ENCODE measurements at regions of chr22 and their contacts with region 1.

Region 1: GRCh38 chr22:26589845-26590736 is at the start of gene TPST2:
- DNase-seq: peak; percentile 64 to 90 (median 77)
- ATAC-seq: peak; percentile 81
- H3K4me3 ChIP-seq: peak within 1 kb of the TSS; percentile 75 to 88
- H3K4me3 Mint-ChIP-seq: peak within 1 kb of the TSS; percentile 94
- H3K27ac ChIP-seq: peak within 1 kb of the TSS; percentile 75 to 85
- H3K27ac Mint-ChIP-seq: peak within 1 kb of the TSS; percentile 96
- H3K4me1 ChIP-seq: peaks cover 79% of the 10 kb centered on the region
- H3K4me1 Mint-ChIP-seq: peaks cover 80% of the 10 kb centered on the region
- H3K27me3 ChIP-seq: no peaks in the 10 kb centered on the region
- H3K27me3 Mint-ChIP-seq: no peaks in the 10 kb centered on the region
- CTCF ChIP-seq: no peak
- total RNA-seq, gene TPST2: 24.3 to 26.3 TPM

Region 2: GRCh38 chr22:25067851-25068421 is 1522.2 kb before region 1 on chr22:
- CTCF ChIA-PET with region 1: no interaction called
- POLR2A ChIA-PET with region 1: no interaction called
- intact Hi-C with region 1: loop called in 1 of 2 experiments (anchors 10 kb)
- DNase-seq: peak; percentile 73 to 97 (median 87)
- ATAC-seq: peak; percentile 85
- H3K4me3 ChIP-seq: peak overlapping the region; percentile 1 to 40
- H3K4me3 Mint-ChIP-seq: peak overlapping the region; percentile 77
- H3K27ac ChIP-seq: peak overlapping the region; percentile 69 to 72
- H3K27ac Mint-ChIP-seq: peak overlapping the region; percentile 99
- H3K4me1 ChIP-seq: peaks cover 67% of the 10 kb centered on the region
- H3K4me1 Mint-ChIP-seq: peaks cover 94% of the 10 kb centered on the region
- H3K27me3 ChIP-seq: no peaks in the 10 kb centered on the region
- H3K27me3 Mint-ChIP-seq: no peaks in the 10 kb centered on the region
- CTCF ChIP-seq: no peak

Region 3: DNA sequence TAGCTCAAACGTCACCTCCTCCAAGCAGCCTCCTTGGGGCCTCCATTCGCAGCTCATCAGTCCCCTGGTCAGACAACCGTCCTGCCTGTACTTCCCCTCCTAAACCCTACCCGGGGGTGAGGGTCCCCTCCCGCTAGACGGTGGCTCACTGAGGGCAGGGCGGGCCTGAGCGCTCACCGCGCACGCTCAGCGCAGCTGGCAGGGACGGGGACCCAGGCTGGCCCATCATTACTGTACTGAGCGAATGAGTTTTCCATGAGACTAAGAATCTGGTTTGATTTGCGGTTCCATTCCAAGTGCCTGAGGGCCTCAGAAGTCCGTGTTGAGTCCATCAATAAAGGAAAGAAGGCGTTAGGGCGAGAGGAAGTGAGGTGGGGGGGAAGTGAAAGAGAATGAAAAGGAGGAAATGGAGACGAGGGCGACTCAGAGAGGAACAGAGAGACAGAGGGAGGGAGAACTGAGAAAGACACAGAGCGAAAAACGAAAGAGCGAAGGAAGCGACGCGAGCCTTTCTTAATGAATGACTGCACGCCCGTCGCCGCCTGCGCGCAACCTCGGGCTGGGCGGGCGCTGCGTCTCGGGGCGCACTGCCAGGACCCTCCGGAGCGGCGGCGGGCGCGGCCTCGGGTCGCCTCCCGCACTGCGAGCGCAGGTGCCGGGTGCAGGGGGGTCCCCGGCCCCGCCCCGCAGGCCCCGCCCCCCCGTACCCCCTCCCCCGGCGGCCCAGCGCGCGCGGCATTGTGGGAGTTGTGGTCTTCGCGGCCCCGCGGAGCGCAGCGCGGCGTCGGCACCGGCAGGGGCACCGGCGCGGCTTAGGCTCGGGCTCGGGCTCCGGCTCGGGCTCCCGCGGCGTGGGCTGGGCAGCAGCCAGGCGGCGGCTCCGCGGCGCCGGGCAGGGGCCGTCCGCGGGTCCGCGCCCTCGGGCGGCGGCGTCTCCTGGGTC is 161.3 kb before region 1 on chr22 and contains the start of gene ASPHD2:
- CTCF ChIA-PET with region 1: no interaction called
- POLR2A ChIA-PET with region 1: no interaction called
- intact Hi-C with region 1: loop called in 1 of 2 experiments (anchors 5 kb)
- DNase-seq: peak; percentile 62 to 92 (median 80)
- ATAC-seq: peak; percentile 89
- H3K4me3 ChIP-seq: peak within 1 kb of the TSS; percentile 84 to 88
- H3K4me3 Mint-ChIP-seq: peak within 1 kb of the TSS; percentile 100
- H3K27ac ChIP-seq: peak within 1 kb of the TSS; percentile 89 to 96
- H3K27ac Mint-ChIP-seq: peak within 1 kb of the TSS; percentile 99
- H3K4me1 ChIP-seq: peaks cover 23% of the 10 kb centered on the region
- H3K4me1 Mint-ChIP-seq: peaks cover 34% of the 10 kb centered on the region
- H3K27me3 ChIP-seq: no peaks in the 10 kb centered on the region
- H3K27me3 Mint-ChIP-seq: no peaks in the 10 kb centered on the region
- CTCF ChIP-seq: no peak
- total RNA-seq, gene ASPHD2: 0.90 to 1.00 TPM

Region 4: GRCh38 chr22:26483439-26484359 is 106.4 kb before region 1 on chr22 and contains the starts of genes HPS4 and SRRD:
- CTCF ChIA-PET with region 1: no interaction called
- POLR2A ChIA-PET with region 1: interaction called, 8 read pairs
- intact Hi-C with region 1: loop called (anchors 2 to 5 kb)
- DNase-seq: peak; percentile 87 to 97 (median 93)
- ATAC-seq: peak; percentile 83
- H3K4me3 ChIP-seq: peak within 1 kb of the TSS; percentile 78 to 97
- H3K4me3 Mint-ChIP-seq: peak within 1 kb of the TSS; percentile 95
- H3K27ac ChIP-seq: peak within 1 kb of the TSS; percentile 85 to 94
- H3K27ac Mint-ChIP-seq: peak within 1 kb of the TSS; percentile 99
- H3K4me1 ChIP-seq: peaks cover 53% of the 10 kb centered on the region
- H3K4me1 Mint-ChIP-seq: peaks cover 69% of the 10 kb centered on the region
- H3K27me3 ChIP-seq: no peaks in the 10 kb centered on the region
- H3K27me3 Mint-ChIP-seq: no peaks in the 10 kb centered on the region
- CTCF ChIP-seq: no peak
- total RNA-seq, gene HPS4: 67.0 to 71.0 TPM
- total RNA-seq, gene SRRD: 22.1 to 24.1 TPM

Region 5: DNA sequence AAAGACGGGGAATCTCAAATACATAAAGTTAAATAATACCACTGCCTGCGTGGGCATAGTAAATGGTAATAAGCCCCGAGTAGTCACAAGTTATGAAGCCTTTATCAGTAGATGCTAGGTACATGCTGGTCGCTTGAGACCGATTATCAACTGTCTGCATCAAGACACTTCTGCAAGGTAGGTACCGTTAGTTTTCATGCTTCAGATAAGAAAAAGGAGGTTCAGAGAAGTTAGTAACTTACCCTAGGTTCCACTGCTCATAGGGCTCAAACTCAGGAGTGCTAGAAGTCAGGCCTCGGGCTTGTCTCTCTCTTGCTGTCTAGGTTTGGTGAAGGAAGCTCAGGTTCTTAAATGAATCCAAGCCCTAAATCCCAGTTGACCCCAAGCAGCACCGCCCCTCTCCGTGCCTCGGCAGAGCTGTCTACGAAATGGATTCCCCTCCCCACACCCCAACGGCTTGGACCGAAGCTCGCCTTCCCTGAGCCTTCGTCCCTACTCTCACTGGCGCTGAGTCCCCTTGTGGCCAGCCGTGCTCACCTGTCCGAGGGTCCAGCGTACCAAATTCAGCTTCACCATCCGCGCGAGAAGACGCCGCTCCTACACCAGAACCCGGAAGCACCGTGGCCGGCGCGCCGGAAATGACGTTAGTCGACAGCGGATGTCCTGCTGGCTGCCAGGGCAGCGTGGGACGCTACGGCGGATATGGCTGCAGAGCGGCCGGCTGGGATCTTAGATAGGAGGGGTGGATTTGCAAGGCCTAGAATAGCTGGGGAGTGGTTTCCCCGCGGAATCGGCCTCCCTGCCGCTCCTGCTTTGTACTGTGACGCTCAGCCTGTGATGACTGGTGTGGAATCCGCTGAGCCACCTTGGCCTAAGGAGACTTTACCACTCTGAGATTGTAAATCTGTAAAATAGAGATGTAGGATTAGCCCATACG is 78.0 kb before region 1 on chr22 and contains the start of gene TFIP11:
- CTCF ChIA-PET with region 1: no interaction called
- POLR2A ChIA-PET with region 1: no interaction called
- intact Hi-C with region 1: loop called (anchors 2 to 5 kb)
- DNase-seq: peak; percentile 76 to 94 (median 92)
- ATAC-seq: peak; percentile 86
- H3K4me3 ChIP-seq: peak within 1 kb of the TSS; percentile 78 to 90
- H3K4me3 Mint-ChIP-seq: peak within 1 kb of the TSS; percentile 96
- H3K27ac ChIP-seq: peak within 1 kb of the TSS; percentile 81 to 85
- H3K27ac Mint-ChIP-seq: peak within 1 kb of the TSS; percentile 99
- H3K4me1 ChIP-seq: peaks cover 25% of the 10 kb centered on the region
- H3K4me1 Mint-ChIP-seq: peaks cover 44% of the 10 kb centered on the region
- H3K27me3 ChIP-seq: no peaks in the 10 kb centered on the region
- H3K27me3 Mint-ChIP-seq: no peaks in the 10 kb centered on the region
- CTCF ChIP-seq: no peak
- total RNA-seq, gene TFIP11: 138 to 142 TPM

Region 6: DNA sequence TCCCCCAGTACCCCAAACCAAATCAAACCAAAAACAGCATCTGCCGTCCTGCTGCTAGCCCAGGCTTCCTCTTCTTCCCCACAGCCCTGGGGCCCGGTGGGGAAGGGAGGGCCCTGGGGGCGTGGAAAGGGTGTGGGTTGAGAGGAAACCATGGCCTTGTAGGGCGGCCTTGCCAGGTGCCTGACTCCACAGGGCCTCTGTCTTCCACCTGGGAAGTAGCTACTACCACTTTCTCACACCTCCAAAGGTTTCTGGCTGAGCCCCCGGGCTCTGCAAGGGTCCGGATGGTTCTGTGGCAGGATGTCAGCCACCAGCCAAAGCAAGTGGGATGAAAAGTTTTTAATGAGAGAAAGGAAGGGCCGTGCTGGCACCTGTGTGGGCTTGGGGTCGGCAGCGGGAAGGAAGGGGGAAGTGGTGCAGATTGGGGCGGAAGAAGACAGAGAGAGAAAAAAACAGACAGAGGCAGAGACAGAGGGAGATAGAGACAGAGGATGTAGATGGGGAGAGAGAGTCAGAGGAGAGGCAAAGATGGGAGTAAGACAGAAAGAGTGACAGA is 10.7 kb before region 1 on chr22:
- CTCF ChIA-PET with region 1: interaction called, 5 read pairs
- POLR2A ChIA-PET with region 1: interaction called, 7 read pairs
- intact Hi-C with region 1: loop called in 1 of 2 experiments (anchors 1 kb)
- DNase-seq: peak in 8 of 9 experiments; percentile 50 to 81 (median 66)
- ATAC-seq: peak; percentile 95
- H3K4me3 ChIP-seq: peak overlapping the region; percentile 9 to 19
- H3K4me3 Mint-ChIP-seq: peak overlapping the region; percentile 77
- H3K27ac ChIP-seq: peak overlapping the region; percentile 22 to 79
- H3K27ac Mint-ChIP-seq: peak overlapping the region; percentile 94
- H3K4me1 ChIP-seq: peaks cover 64% of the 10 kb centered on the region
- H3K4me1 Mint-ChIP-seq: peaks cover 72% of the 10 kb centered on the region
- H3K27me3 ChIP-seq: no peaks in the 10 kb centered on the region
- H3K27me3 Mint-ChIP-seq: no peaks in the 10 kb centered on the region
- CTCF ChIP-seq: no peak

Region 7: GRCh38 chr22:26658671-26659478 is 68.8 kb after region 1 on chr22:
- CTCF ChIA-PET with region 1: no interaction called
- POLR2A ChIA-PET with region 1: interaction called, 3 read pairs
- intact Hi-C with region 1: loop called in 1 of 2 experiments (anchors 1 kb)
- DNase-seq: peak in 8 of 9 experiments; percentile 62 to 87 (median 81)
- ATAC-seq: peak; percentile 74
- H3K4me3 ChIP-seq: peak overlapping the region; percentile 91 to 96
- H3K4me3 Mint-ChIP-seq: peak overlapping the region; percentile 91
- H3K27ac ChIP-seq: peak overlapping the region; percentile 21 to 57
- H3K27ac Mint-ChIP-seq: peak overlapping the region; percentile 96
- H3K4me1 ChIP-seq: peaks cover 20% of the 10 kb centered on the region
- H3K4me1 Mint-ChIP-seq: peaks cover 30% of the 10 kb centered on the region
- H3K27me3 ChIP-seq: no peaks in the 10 kb centered on the region
- H3K27me3 Mint-ChIP-seq: no peaks in the 10 kb centered on the region
- CTCF ChIP-seq: no peak

Measured in CD8-positive, alpha-beta T cell (primary cell).